HepG2 (cell line): ENCODE measurements at regions of chr13 and their contacts with region 1.

Region 1: DNA sequence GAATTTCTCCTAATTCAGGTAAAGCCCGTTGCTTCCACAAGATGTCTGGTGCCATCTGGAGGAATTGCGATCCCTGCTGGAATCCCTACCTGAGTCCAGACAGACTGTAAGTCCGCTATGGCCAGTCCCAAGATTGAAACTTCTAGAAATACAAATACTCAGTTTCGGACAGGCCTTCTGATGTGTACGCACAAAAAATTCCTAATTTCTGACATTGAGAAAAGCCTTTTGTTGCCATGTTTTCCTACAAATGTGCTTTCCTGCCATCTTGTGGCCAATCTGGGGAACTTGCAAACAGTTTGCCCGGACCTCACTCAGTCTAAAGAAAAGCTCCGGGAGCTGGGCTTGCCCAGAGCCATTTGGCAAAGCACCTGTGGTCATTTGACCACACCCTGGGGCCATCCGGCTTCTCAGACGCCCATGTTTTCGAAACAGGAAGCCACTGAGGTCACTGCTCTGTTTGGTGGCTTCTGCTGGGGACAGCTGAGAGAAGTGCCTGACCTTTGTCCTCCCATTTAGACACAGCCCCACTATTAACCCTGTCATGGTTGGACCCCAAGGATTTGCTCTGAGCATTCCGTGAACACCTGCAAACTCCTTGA is 79.4 kb downstream of the SLC15A1 start:
- DNase-seq: peak; percentile 81
- ATAC-seq: peak; percentile 93
- H3K4me3 ChIP-seq: peak overlapping the region; percentile 31 to 56 (median 50); a peak in 5 of 6 replicates
- H3K27ac ChIP-seq: no peak overlapping the region
- H3K4me1 ChIP-seq: peaks cover 44% of the 10 kb centered on the region
- H3K27me3 ChIP-seq: no peaks in the 10 kb centered on the region
- CTCF ChIP-seq: peak; percentile 82
- EP300 ChIP-seq: no peak
- POLR2A ChIP-seq: no peak
- RAD21 ChIP-seq: peak; percentile 82; the same call in 1 of the 2 replicates

Region 2: DNA sequence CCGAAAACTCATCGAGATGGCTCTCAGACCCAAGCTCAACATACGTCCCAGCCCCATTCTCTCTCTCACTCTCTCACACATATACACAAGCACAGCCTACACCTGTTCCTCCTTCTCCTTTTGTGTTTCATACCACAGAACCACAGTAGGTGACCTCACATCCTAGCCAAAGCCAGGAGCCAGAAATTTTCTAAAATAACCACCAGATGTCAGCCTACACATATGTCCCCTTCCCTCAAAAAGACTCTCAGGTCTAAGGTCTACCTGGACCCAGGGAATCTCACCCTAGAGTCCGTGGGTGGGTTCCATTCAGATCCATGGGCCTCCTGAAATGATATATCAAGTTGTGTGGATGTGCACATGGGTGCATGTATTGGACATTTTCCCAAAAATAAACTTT is 823.7 kb before region 1 on chr13:
- CTCF ChIA-PET with region 1: no interaction called
- POLR2A ChIA-PET with region 1: no interaction called
- in situ Hi-C with region 1: loop called (anchors 25 kb)
- intact Hi-C with region 1: loop called (anchors 2 kb)
- DNase-seq: peak; percentile 36
- ATAC-seq: peak; percentile 97
- H3K4me3 ChIP-seq: no peak overlapping the region
- H3K27ac ChIP-seq: no peak overlapping the region
- H3K4me1 ChIP-seq: peaks cover 13% of the 10 kb centered on the region
- H3K27me3 ChIP-seq: peaks cover 0 to under 1% of the 10 kb centered on the region in 2 experiments; a peak in 2 of 5 replicates
- CTCF ChIP-seq: peak; percentile 71
- EP300 ChIP-seq: no peak
- POLR2A ChIP-seq: no peak
- RAD21 ChIP-seq: peak; percentile 34; the same call in 1 of the 2 replicates

Region 3: DNA sequence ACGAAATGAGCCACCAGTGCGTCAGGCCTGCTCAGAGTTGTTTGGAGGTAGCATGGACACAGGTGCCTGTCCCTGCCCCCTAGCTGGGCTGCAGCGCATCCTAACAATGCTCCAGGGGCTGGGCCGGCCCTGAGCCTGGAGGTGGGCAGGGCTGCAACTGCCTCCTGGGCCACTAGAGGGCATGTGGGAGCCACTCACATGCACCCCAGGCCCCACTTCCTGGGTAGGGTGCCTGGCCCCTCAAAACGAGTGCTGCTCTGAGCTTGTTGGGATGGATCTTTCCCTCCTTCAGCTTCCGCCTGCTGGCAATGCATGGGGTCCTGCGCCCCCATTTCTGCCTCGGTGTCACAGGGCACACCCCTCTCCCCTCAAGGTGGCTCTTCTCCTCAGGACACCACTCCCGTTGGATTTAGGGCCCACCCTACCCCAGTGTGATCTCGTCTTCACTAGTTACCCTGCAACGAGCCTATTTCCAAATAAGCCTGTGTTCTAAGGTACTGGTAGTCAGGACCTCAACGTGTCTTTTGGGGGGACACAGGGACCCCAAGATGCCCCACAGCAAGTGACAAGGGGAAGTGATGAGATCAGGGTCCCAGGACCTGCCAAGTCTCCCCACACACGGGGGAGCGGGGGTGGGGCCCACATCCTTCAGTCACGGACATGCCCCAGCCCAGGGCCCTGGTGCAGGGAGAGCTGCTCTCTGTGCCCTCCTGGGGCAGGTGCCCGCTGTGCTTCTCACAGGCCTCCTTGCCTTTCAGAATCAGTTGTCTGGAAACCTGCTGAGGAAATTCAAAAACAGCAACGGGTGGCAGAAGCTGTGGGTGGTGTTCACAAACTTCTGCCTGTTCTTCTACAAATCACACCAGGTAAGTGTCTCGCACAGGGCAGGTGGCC is 227.5 kb before region 1 on chr13:
- CTCF ChIA-PET with region 1: interaction called, 11 read pairs
- POLR2A ChIA-PET with region 1: no interaction called
- in situ Hi-C with region 1: no loop called
- intact Hi-C with region 1: loop called (anchors 1 kb)
- DNase-seq: peak; percentile 42
- ATAC-seq: peak; percentile 76
- H3K4me3 ChIP-seq: no peak overlapping the region
- H3K27ac ChIP-seq: no peak overlapping the region
- H3K4me1 ChIP-seq: peaks cover 12% of the 10 kb centered on the region
- H3K27me3 ChIP-seq: no peaks in the 10 kb centered on the region
- CTCF ChIP-seq: peak; percentile 97
- EP300 ChIP-seq: no peak
- POLR2A ChIP-seq: peak in 1 of 2 experiments; percentile 36; a peak in 1 of 4 replicates
- RAD21 ChIP-seq: peak; percentile 79

Region 4: GRCh38 chr13:98466634-98467236 is 206.3 kb before region 1 on chr13:
- CTCF ChIA-PET with region 1: interaction called, 4 read pairs
- POLR2A ChIA-PET with region 1: no interaction called
- in situ Hi-C with region 1: no loop called
- intact Hi-C with region 1: loop called (anchors 5 kb)
- DNase-seq: peak; percentile 43
- ATAC-seq: peak; percentile 74
- H3K4me3 ChIP-seq: no peak overlapping the region
- H3K27ac ChIP-seq: no peak overlapping the region
- H3K4me1 ChIP-seq: peaks cover 16% of the 10 kb centered on the region
- H3K27me3 ChIP-seq: no peaks in the 10 kb centered on the region
- CTCF ChIP-seq: peak; percentile 69
- EP300 ChIP-seq: no peak
- POLR2A ChIP-seq: no peak
- RAD21 ChIP-seq: peak; percentile 33

Region 5: GRCh38 chr13:99151516-99151915 is 478.5 kb after region 1 on chr13:
- CTCF ChIA-PET with region 1: no interaction called
- POLR2A ChIA-PET with region 1: no interaction called
- in situ Hi-C with region 1: no loop called
- intact Hi-C with region 1: no loop called
- DNase-seq: no peak
- ATAC-seq: no peak
- H3K4me3 ChIP-seq: no peak overlapping the region
- H3K27ac ChIP-seq: no peak overlapping the region
- H3K4me1 ChIP-seq: no peaks in the 10 kb centered on the region
- H3K27me3 ChIP-seq: peaks cover 0 to under 1% of the 10 kb centered on the region in 2 experiments; a peak in 1 of 5 replicates
- CTCF ChIP-seq: no peak
- EP300 ChIP-seq: no peak
- POLR2A ChIP-seq: no peak
- RAD21 ChIP-seq: no peak